ENCODE measurements at regions of chr19 and their contacts with region 1.

Region 1: GRCh38 chr19:48363810-48364563 is at the starts of genes SYNGR4 and TMEM143:
- DNase-seq: peak; percentile 99
- H3K27ac ChIP-seq: peak within 1 kb of the TSS; percentile 96
- CTCF ChIP-seq: no peak

Region 2: DNA sequence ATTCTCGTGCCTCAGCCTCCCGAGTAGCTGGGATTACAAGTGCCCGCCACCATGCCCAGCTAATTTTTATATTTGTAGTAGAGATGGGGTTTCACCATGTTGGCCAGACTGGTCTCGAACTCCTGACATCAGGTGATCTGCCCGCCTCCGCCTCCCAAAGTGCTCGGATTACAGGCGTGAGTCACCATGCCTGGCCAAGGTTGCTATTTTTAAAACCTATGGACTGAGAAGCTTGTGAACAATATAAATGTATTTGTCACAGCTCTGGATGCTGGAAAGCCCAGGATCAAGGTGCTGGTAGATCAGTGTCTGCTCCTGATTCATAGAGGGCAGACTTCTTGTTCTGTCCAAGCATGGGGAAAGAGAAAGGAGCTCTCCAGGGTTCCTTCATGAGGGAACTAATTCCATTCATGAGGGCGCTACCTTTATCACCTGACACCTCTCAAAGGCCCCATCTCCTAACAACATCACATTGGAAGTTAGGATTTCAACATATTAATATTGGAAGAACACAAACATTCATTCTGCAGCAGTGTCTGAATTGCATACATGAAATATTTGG is 124.3 kb before region 1 on chr19:
- CTCF ChIA-PET with region 1: no interaction called
- POLR2A ChIA-PET with region 1: no interaction called
- DNase-seq: no peak
- H3K27ac ChIP-seq: no peak overlapping the region
- CTCF ChIP-seq: no peak

Region 3: GRCh38 chr19:48391107-48391986 is 27.4 kb after region 1 on chr19 and contains the start of gene KDELR1:
- CTCF ChIA-PET with region 1: interaction called, 13 read pairs
- POLR2A ChIA-PET with region 1: interaction called, 5 read pairs
- DNase-seq: peak; percentile 81
- H3K27ac ChIP-seq: peak within 1 kb of the TSS; percentile 84
- CTCF ChIP-seq: peak; percentile 92

Region 4: GRCh38 chr19:48588670-48589399 is 224.8 kb after region 1 on chr19:
- CTCF ChIA-PET with region 1: no interaction called
- POLR2A ChIA-PET with region 1: no interaction called
- DNase-seq: peak; percentile 93
- H3K27ac ChIP-seq: peak overlapping the region; percentile 74
- CTCF ChIP-seq: peak; percentile 93

Region 5: DNA sequence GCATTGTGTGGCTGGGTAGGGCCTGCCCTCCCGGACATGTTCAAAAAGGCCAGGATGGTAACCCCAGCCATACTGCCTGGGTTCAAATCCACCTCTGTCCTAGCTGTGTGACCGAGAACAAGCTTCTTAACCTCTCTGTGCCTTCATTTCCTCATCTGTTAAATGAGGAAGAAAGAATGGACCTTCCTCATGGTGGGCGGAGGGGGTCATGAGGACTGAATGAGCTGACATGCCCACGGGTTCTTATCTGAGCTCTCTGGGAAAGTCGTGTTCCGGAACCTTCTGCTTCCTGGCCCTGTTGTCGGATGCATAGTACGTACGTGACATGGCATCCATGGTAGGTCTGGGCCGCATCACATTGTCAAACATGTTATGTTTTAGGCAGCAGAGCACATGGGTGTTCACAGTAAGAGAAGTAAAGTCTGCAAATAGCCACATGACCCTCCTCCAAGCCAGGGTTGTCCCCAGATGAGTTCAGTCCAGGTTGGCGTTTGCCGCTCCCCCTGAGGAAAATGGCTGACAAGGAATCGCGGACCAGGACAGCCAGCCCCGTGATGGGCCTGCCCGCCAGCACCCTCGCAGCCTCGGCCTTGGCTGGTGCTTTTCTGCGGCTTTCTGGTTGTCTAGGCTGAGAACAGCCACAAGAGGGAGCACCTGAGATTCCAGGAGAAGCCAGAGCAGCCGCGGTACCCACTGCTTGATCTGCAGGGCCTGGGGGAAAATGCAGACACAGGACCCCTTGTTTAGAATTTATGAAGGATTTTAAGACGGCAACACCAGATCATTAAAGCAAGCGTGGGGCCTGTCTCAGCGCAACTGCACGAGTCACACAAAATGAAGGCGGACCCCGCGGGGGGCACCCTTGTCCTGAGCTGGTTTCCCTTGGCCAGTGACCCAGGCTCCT is 311.2 kb after region 1 on chr19:
- CTCF ChIA-PET with region 1: no interaction called
- POLR2A ChIA-PET with region 1: no interaction called
- DNase-seq: peak; percentile 85
- H3K27ac ChIP-seq: no peak overlapping the region
- CTCF ChIP-seq: peak; percentile 91